ENCODE measurements at regions of chr11 and their contacts with region 1.

Region 1: GRCh38 chr11:61639816-61640443 is 40.3 kb upstream of the DAGLA start:
- DNase-seq: no peak
- H3K4me3 ChIP-seq: no peak overlapping the region
- H3K27me3 ChIP-seq: peaks cover 5% of the 10 kb centered on the region; the same call in 1 of the 2 replicates
- CTCF ChIP-seq: no peak

Region 2: DNA sequence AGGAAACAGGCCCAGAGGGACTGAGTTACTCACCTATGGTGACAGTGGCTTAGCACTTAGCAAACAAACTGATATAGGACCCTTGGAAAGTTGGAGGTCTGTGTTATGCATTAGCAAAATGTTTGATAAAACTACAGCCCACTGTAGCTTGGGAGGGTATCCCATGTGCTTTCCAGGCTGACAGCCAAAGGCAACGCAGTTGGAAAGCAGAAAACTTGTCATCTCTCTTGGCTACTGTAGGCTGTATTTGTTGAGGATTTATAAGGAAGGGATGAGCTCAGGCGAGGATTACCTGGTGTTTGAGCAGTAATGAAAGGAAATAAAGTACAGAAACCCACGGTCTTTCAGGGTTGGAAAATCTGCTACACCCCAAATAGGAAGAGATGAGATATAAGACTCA is 186.2 kb before region 1 on chr11:
- CTCF ChIA-PET with region 1: interaction called, 84 read pairs
- POLR2A ChIA-PET with region 1: no interaction called
- DNase-seq: no peak
- H3K4me3 ChIP-seq: no peak overlapping the region
- H3K27me3 ChIP-seq: no peaks in the 10 kb centered on the region
- CTCF ChIP-seq: no peak

Region 3: GRCh38 chr11:61532139-61533038 is 107.5 kb before region 1 on chr11:
- CTCF ChIA-PET with region 1: interaction called, 17 read pairs
- POLR2A ChIA-PET with region 1: no interaction called
- DNase-seq: no peak
- H3K4me3 ChIP-seq: no peak overlapping the region
- H3K27me3 ChIP-seq: peaks cover 11% of the 10 kb centered on the region
- CTCF ChIP-seq: peak; percentile 88

Region 4: GRCh38 chr11:61560751-61561150 is 79.2 kb before region 1 on chr11:
- CTCF ChIA-PET with region 1: no interaction called
- POLR2A ChIA-PET with region 1: no interaction called
- DNase-seq: no peak
- H3K4me3 ChIP-seq: no peak overlapping the region
- H3K27me3 ChIP-seq: peaks cover 30% of the 10 kb centered on the region
- CTCF ChIP-seq: no peak

Region 5: GRCh38 chr11:61627567-61628445 is 12.1 kb before region 1 on chr11:
- CTCF ChIA-PET with region 1: interaction called, 49 read pairs
- POLR2A ChIA-PET with region 1: no interaction called
- DNase-seq: no peak
- H3K4me3 ChIP-seq: no peak overlapping the region
- H3K27me3 ChIP-seq: peaks cover 3% of the 10 kb centered on the region
- CTCF ChIP-seq: peak; percentile 92

Region 6: DNA sequence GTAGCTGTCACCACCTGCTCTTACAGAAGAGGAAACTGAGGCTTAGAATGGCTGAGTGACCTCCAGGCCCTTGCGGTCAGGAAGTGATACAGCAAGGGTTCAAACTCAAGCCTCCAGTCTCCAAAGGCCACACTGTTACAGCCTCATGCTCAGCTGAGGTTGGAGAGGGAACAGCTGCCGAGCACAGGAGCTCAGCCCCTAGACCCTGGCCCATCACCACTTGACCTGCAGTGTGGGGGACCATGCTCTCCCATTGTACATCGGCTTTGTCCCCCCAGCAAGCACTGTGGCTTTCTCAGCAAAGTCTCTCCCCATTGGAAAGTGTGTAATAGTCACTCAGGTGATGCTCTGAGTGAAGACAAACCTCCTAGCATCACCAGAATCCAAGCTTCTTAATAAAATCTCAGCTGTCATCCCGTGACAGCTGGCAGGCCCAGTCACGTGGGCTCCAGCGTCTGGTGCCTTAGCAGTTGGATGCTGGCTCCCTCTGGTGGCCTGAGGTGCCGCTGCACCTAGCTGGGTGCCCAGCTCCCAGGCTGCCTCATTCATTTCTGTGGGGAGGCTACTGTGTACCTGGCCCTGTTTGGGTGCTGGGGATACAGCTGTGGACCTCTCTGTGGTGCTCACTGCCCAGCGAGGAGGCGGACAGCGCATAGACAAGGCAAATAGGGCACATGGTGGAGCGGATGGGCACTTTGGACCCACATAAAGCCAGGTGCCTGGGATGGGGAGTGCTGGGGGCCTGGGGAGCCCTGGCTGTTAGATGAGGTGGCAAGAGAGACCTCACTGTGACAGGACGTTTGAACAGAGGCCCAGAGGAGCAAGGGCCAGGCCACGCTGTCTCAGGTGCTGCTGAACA is 93.4 kb after region 1 on chr11:
- CTCF ChIA-PET with region 1: interaction called, 10 read pairs
- POLR2A ChIA-PET with region 1: no interaction called
- DNase-seq: peak; percentile 18
- H3K4me3 ChIP-seq: no peak overlapping the region
- H3K27me3 ChIP-seq: no peaks in the 10 kb centered on the region
- CTCF ChIP-seq: peak; percentile 100